ENCODE measurements at regions of chr15 and their contacts with region 1.

Region 1: GRCh38 chr15:87689716-87690115 is 566.8 kb downstream of the NTRK3 start:
- DNase-seq: no peak
- ATAC-seq: no peak
- H3K4me3 ChIP-seq: no peak overlapping the region
- H3K27ac ChIP-seq: no peak overlapping the region
- H3K4me1 ChIP-seq: no peaks in the 10 kb centered on the region
- H3K27me3 ChIP-seq: no peaks in the 10 kb centered on the region
- CTCF ChIP-seq: no peak

Region 2: GRCh38 chr15:86362555-86362954 is 1327.2 kb before region 1 on chr15:
- intact Hi-C with region 1: loop called in 1 of 10 experiments (anchors 5 kb)
- DNase-seq: no peak
- ATAC-seq: no peak
- H3K4me3 ChIP-seq: no peak overlapping the region
- H3K27ac ChIP-seq: no peak overlapping the region
- H3K4me1 ChIP-seq: no peaks in the 10 kb centered on the region
- H3K27me3 ChIP-seq: peaks cover 0 to 3% (median 0%) of the 10 kb centered on the region in 7 donors
- CTCF ChIP-seq: no peak

Region 3: DNA sequence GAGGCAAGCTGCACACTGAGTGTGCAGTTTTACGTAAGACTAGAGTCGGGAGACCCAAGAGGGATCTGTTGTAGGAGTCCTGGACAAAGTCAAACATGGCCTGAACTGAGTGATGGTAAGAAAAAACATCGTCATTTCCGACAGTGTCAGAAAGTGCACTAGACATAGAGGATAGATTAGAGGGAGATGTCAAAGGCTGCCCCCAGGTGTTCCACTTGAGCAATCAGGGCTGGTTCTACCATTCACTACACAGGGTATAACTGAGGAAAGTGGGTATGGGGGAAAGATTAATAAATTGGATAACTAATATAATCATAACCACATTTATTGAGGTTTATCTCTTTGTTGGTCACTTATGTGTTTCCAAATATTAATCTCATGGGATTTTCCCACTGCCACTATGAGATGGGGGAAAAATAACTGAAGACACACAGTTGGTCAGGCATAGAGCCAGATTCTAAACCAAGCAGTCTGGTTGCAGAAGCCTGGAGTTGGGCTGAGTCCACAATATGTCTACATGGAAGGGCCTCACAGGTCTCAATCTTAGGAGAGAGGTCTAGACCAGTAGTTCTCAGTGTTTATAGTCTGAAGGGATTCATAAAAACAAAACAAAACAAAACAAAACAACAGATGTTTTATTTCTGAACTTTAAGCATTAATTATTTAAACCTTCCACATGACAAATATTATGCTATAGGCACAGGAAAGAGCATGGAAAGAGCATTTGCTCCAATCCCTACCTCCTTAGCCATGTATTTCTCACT is 199.6 kb before region 1 on chr15:
- intact Hi-C with region 1: no loop called
- DNase-seq: no peak
- ATAC-seq: no peak
- H3K4me3 ChIP-seq: no peak overlapping the region
- H3K27ac ChIP-seq: peak overlapping the region in 1 of 10 donors; percentile 20
- H3K4me1 ChIP-seq: peaks cover 0 to 36% (median 5%) of the 10 kb centered on the region in 9 donors
- H3K27me3 ChIP-seq: no peaks in the 10 kb centered on the region
- CTCF ChIP-seq: no peak

Region 4: GRCh38 chr15:87645723-87646122 is 44.0 kb before region 1 on chr15:
- intact Hi-C with region 1: loop called in 1 of 10 experiments (anchors 1 kb)
- DNase-seq: no peak
- ATAC-seq: no peak
- H3K4me3 ChIP-seq: no peak overlapping the region
- H3K27ac ChIP-seq: no peak overlapping the region
- H3K4me1 ChIP-seq: no peaks in the 10 kb centered on the region
- H3K27me3 ChIP-seq: no peaks in the 10 kb centered on the region
- CTCF ChIP-seq: no peak

Measured in heart right ventricle (tissue), 16 donors.